Dorsolateral prefrontal cortex (tissue), 120 donors: ENCODE measurements at regions of chr4 and their contacts with region 1.

Region 1: GRCh38 chr4:67700738-67701516 is at the start of gene UBA6:
- DNase-seq: peak; percentile 87 to 97 (median 94)
- H3K4me3 ChIP-seq: peak within 1 kb of the TSS; percentile 62 to 98 (median 86)
- H3K27ac ChIP-seq: peak within 1 kb of the TSS; percentile 16 to 94 (median 83)
- H3K27me3 ChIP-seq: no peaks in the 10 kb centered on the region
- CTCF ChIP-seq: peak; percentile 28 to 84 (median 56)
- total RNA-seq, gene UBA6: 43.0 to 80.2 (median 60.7) TPM

Region 2: GRCh38 chr4:67545199-67546003 is 155.5 kb before region 1 on chr4 and contains the start of gene CENPC:
- intact Hi-C with region 1: loop called (anchors 2 to 5 kb)
- DNase-seq: peak; percentile 94 to 97 (median 96)
- H3K4me3 ChIP-seq: peak within 1 kb of the TSS; percentile 50 to 96 (median 84)
- H3K27ac ChIP-seq: peak within 1 kb of the TSS; percentile 4 to 94 (median 88)
- H3K27me3 ChIP-seq: no peaks in the 10 kb centered on the region
- CTCF ChIP-seq: peak in 24 of 56 donors; percentile 7 to 61 (median 24)
- total RNA-seq, gene CENPC: 30.9 to 68.9 (median 46.0) TPM

Region 3: DNA sequence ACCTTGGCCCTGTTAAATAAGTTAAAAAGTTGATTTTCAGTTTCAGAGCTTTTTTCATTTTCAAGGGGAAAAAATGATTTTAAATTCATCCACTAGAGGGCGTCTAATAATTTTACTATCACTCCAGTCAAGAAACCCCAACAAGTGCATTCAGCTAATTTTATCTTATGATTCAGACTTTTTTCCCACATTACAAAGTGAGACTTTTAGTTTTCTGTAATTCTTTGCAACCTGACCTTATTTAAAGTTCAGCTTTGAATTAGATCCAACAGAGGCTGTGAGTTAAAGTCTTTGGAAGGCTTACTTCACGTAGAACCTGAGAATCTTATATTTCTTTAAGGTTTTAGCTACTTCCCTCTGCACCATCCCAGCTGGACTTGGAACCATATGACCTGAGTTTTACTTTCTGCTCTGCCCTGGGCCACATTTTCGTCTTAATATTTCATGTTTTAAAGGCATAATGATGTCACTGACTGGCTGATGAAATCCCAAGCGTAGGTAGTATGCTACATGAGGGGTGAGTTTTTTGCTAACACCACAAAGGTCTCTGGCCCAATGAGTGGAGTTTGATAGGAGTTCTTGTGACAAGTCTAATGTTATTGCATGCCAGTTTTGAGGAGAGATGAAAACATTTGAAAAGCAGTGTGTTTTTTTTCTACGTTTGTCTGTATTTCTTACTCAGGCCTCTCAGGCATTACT is 46.0 kb after region 1 on chr4:
- intact Hi-C with region 1: loop called in 1 of 2 experiments (anchors 2 kb)
- DNase-seq: no peak
- H3K4me3 ChIP-seq: no peak overlapping the region
- H3K27ac ChIP-seq: no peak overlapping the region
- H3K27me3 ChIP-seq: no peaks in the 10 kb centered on the region
- CTCF ChIP-seq: peak; percentile 54 to 90 (median 74)

Region 4: DNA sequence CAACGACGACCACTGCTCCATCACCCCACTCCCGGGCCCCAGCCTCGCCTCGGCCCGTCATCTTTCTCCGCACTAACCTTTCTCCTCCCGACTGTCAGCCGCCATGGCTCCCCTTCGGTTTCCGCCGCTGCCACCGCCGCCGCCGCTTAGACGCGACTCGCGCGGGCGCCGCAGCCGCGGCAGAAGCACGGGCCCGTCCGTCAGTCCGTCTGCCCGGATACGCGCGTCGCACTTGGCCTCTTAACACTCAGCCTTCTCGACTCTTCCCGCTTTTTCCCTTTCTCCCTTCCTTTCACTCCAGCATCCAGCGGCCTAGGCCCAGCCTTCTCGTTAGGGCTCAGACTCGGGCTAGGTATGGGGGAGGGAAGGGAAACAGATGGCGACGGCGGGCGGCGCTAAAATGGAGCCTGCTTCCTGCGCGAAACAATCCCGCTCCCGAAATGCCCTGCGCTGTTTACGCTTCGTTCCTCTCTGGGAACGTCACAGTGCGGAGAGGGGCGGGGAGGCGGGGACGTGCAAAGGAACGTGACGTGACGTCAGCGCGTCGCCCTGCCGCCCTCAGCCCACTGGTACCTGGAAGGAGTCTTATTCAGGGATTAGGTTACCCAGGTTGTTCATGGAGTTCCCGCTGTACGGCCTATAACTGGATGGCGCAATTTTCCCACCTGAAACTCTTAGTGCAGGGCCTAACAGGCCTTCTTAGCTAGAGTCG is 648.9 kb after region 1 on chr4 and contains the start of gene YTHDC1:
- intact Hi-C with region 1: loop called in 1 of 2 experiments (anchors 5 kb)
- DNase-seq: peak; percentile 95 to 98 (median 96)
- H3K4me3 ChIP-seq: peak within 1 kb of the TSS; percentile 65 to 98 (median 85)
- H3K27ac ChIP-seq: peak within 1 kb of the TSS; percentile 63 to 99 (median 95)
- H3K27me3 ChIP-seq: no peaks in the 10 kb centered on the region
- CTCF ChIP-seq: peak in 35 of 56 donors; percentile 1 to 54 (median 27)
- total RNA-seq, gene YTHDC1: 76.7 to 132 (median 95.3) TPM